A673 (cell line): ENCODE measurements at regions of chr1 and their contacts with region 1.

Region 1: DNA sequence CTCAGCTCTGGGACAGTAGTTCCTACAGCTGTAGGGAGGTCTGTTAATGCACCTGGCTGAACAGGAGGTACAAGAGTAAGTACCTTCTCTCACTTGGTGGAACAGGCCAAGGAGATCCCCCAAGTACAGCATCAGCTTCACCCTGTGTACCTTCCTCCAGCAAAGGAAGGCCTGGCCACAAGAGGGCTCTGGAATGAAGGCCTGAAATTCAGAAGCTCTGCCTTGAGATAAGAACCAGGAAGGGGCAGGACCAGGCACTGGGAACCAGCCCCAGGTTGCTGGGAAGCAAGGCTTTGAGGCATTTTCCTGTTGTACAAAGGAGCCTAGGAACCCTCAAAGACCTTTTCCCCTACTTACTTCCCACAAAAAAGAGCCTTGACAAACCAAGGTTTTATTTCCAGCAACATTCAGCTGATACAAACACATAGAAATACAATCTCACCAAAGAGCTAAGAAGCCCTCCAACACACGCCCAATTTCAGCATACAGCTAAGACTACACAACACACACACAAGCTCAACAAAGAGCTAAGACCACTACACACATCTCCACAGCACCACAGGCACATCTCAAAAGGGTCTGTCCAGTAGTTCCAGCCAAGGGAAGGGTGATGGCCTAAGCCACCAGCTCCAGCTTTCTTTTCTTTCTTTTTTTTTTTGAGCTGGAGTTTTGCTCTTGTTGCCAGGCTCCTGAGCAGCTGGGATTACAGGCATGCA is 23.5 kb downstream of the F11R start:
- DNase-seq: peak; percentile 70
- H3K4me3 ChIP-seq: no peak overlapping the region
- H3K27ac ChIP-seq: no peak overlapping the region
- H3K4me1 ChIP-seq: no peaks in the 10 kb centered on the region
- H3K27me3 ChIP-seq: no peaks in the 10 kb centered on the region
- CTCF ChIP-seq: peak; percentile 67

Region 2: GRCh38 chr1:160726498-160727315 is 270.8 kb before region 1 on chr1:
- CTCF ChIA-PET with region 1: interaction called, 3 read pairs
- POLR2A ChIA-PET with region 1: no interaction called
- intact Hi-C with region 1: loop called (anchors 5 kb)
- DNase-seq: peak; percentile 84
- H3K4me3 ChIP-seq: no peak overlapping the region
- H3K27ac ChIP-seq: no peak overlapping the region
- H3K4me1 ChIP-seq: no peaks in the 10 kb centered on the region
- H3K27me3 ChIP-seq: no peaks in the 10 kb centered on the region
- CTCF ChIP-seq: peak; percentile 92

Region 3: GRCh38 chr1:161098210-161099068 is 101.0 kb after region 1 on chr1 and contains the start of gene KLHDC9:
- CTCF ChIA-PET with region 1: interaction called, 17 read pairs
- POLR2A ChIA-PET with region 1: no interaction called
- intact Hi-C with region 1: loop called (anchors 1 kb)
- DNase-seq: peak; percentile 88
- H3K4me3 ChIP-seq: peak within 1 kb of the TSS; percentile 66
- H3K27ac ChIP-seq: peak within 1 kb of the TSS; percentile 12
- H3K4me1 ChIP-seq: no peaks in the 10 kb centered on the region
- H3K27me3 ChIP-seq: peaks cover 3% of the 10 kb centered on the region
- CTCF ChIP-seq: no peak
- total RNA-seq, gene KLHDC9: 1.7 and 4.8 TPM in 2 replicates

Region 4: GRCh38 chr1:161139765-161140164 is 142.3 kb after region 1 on chr1:
- CTCF ChIA-PET with region 1: no interaction called
- POLR2A ChIA-PET with region 1: no interaction called
- intact Hi-C with region 1: loop called (anchors 2 kb)
- DNase-seq: peak; percentile 69
- H3K4me3 ChIP-seq: no peak overlapping the region
- H3K27ac ChIP-seq: no peak overlapping the region
- H3K4me1 ChIP-seq: no peaks in the 10 kb centered on the region
- H3K27me3 ChIP-seq: no peaks in the 10 kb centered on the region
- CTCF ChIP-seq: peak; percentile 67

Region 5: DNA sequence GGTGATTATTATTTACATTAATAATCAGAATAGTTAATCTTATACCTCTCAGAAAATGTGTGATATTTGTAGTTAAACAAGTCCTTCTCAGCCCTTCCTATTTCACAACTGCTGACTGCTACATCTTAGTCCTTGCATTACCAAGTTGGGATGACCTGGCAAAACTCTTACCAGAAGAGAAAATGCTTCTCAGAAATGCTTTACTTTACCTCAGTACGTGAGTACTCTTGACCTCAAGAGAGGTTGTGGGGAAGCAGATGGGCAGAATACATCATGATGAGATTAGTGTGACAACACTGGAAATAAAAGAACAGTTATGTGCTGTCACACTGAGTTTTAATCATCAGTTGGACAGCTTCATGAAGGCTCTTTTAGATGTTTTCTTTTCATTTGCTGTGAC is 354.0 kb after region 1 on chr1:
- CTCF ChIA-PET with region 1: interaction called, 20 read pairs
- POLR2A ChIA-PET with region 1: no interaction called
- intact Hi-C with region 1: no loop called
- DNase-seq: no peak
- H3K4me3 ChIP-seq: no peak overlapping the region
- H3K27ac ChIP-seq: no peak overlapping the region
- H3K4me1 ChIP-seq: no peaks in the 10 kb centered on the region
- H3K27me3 ChIP-seq: no peaks in the 10 kb centered on the region
- CTCF ChIP-seq: no peak

Region 6: DNA sequence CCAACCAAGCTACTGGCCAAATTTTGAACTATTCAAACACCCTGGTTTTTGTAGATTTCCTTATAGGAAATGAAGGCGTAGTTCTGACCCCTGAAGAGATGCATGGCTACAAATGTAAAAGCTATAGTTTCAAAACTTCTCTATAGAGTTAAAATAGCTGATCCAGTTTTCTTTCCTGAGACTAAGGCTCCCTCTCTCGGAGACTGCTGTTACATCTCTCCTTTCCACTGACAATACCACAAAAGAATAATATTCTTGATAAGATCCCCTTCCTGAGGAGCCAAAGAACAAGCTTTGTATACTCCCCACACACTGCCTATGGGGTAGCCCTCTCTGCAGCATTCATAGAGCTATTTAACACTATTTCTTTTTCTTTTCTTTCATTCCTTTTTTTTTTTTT is 376.9 kb after region 1 on chr1:
- CTCF ChIA-PET with region 1: no interaction called
- POLR2A ChIA-PET with region 1: no interaction called
- intact Hi-C with region 1: loop called (anchors 10 kb)
- DNase-seq: peak; percentile 39
- H3K4me3 ChIP-seq: no peak overlapping the region
- H3K27ac ChIP-seq: no peak overlapping the region
- H3K4me1 ChIP-seq: no peaks in the 10 kb centered on the region
- H3K27me3 ChIP-seq: no peaks in the 10 kb centered on the region
- CTCF ChIP-seq: peak; percentile 49